Activated CD4-positive, alpha-beta T cell treated with anti-CD3 and anti-CD28 coated beads, Interleukin-2, amount 10 ng/mL, durations not matched to agents 24 days and 14 days (primary cell): ENCODE measurements at regions of chr14 and their contacts with region 1.

Region 1: GRCh38 chr14:96275177-96276112 is 19.4 kb downstream of the BDKRB1 start:
- DNase-seq: peak; percentile 89
- H3K4me3 Mint-ChIP-seq: no peak overlapping the region
- H3K27ac Mint-ChIP-seq: no peak overlapping the region
- H3K4me1 Mint-ChIP-seq: peaks cover 2% of the 10 kb centered on the region
- H3K27me3 Mint-ChIP-seq: peaks cover 2% of the 10 kb centered on the region

Region 2: GRCh38 chr14:96100161-96101029 is 175.1 kb before region 1 on chr14:
- intact Hi-C with region 1: loop called (anchors 1 kb)
- DNase-seq: peak; percentile 81
- H3K4me3 Mint-ChIP-seq: no peak overlapping the region
- H3K27ac Mint-ChIP-seq: no peak overlapping the region
- H3K4me1 Mint-ChIP-seq: no peaks in the 10 kb centered on the region
- H3K27me3 Mint-ChIP-seq: no peaks in the 10 kb centered on the region